ENCODE measurements at regions of chr9 and their contacts with region 1.

Region 1: DNA sequence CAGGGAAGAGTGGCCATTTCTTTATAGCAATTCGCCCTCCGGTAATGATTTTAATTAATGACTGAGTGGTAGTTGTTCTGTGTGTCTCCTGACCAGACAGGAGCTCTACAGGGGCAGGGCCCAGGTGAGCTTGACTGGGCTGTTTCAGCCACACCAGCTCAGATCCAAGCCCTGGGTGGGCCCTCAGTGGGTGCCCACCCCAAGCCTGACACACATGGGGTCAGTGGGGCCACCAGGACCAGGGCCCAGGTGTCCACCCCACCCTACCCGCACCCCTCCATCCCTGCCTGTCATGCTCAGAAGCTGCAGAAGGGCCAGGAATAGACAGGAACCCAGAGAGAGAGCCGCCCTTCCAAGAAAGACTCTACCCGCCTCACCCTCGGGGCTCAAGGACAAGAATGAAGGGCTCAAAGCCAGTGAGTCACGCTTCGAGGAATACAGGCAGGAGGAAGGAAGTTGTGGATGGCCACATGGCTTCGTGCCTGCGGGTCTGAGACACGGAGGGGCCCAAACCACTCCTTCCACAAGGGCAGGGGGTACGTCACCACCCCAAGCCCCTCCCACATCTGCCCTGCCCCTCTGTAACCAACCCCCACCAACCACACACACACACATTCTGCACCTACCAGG is 56.2 kb upstream of the STXBP1 start:
- DNase-seq: peak; percentile 96
- ATAC-seq: peak; percentile 79
- H3K4me3 ChIP-seq: no peak overlapping the region
- H3K27ac ChIP-seq: peak overlapping the region; percentile 88
- H3K4me1 ChIP-seq: peaks cover 66% of the 10 kb centered on the region
- H3K27me3 ChIP-seq: no peaks in the 10 kb centered on the region
- CTCF ChIP-seq: no peak
- POLR2A ChIP-seq: peak; percentile 59; the same call in 1 of the 2 replicates
- RAD21 ChIP-seq: no peak

Region 2: GRCh38 chr9:127537792-127538191 is 18.1 kb before region 1 on chr9:
- CTCF ChIA-PET with region 1: no interaction called
- POLR2A ChIA-PET with region 1: no interaction called
- dilution Hi-C with region 1: no loop called
- in situ Hi-C with region 1: no loop called
- intact Hi-C with region 1: no loop called
- DNase-seq: no peak
- ATAC-seq: no peak
- H3K4me3 ChIP-seq: no peak overlapping the region
- H3K27ac ChIP-seq: peak overlapping the region; percentile 89
- H3K4me1 ChIP-seq: peaks cover 77% of the 10 kb centered on the region
- H3K27me3 ChIP-seq: no peaks in the 10 kb centered on the region
- CTCF ChIP-seq: peak; percentile 32
- POLR2A ChIP-seq: no peak
- RAD21 ChIP-seq: peak; percentile 37; the same call in 1 of the 2 replicates

Region 3: GRCh38 chr9:127785023-127785932 is 229.4 kb after region 1 on chr9:
- CTCF ChIA-PET with region 1: no interaction called
- POLR2A ChIA-PET with region 1: interaction called, 19 read pairs
- dilution Hi-C with region 1: no loop called
- in situ Hi-C with region 1: no loop called
- intact Hi-C with region 1: no loop called
- DNase-seq: peak; percentile 64
- ATAC-seq: peak; percentile 70
- H3K4me3 ChIP-seq: peak overlapping the region; percentile 95
- H3K27ac ChIP-seq: peak overlapping the region; percentile 48; the same call in 1 of the 2 replicates
- H3K4me1 ChIP-seq: no peaks in the 10 kb centered on the region; the same call in 1 of the 2 replicates
- H3K27me3 ChIP-seq: no peaks in the 10 kb centered on the region
- CTCF ChIP-seq: peak; percentile 77
- POLR2A ChIP-seq: no peak; the same call in 1 of the 2 replicates
- RAD21 ChIP-seq: peak; percentile 76

Region 4: DNA sequence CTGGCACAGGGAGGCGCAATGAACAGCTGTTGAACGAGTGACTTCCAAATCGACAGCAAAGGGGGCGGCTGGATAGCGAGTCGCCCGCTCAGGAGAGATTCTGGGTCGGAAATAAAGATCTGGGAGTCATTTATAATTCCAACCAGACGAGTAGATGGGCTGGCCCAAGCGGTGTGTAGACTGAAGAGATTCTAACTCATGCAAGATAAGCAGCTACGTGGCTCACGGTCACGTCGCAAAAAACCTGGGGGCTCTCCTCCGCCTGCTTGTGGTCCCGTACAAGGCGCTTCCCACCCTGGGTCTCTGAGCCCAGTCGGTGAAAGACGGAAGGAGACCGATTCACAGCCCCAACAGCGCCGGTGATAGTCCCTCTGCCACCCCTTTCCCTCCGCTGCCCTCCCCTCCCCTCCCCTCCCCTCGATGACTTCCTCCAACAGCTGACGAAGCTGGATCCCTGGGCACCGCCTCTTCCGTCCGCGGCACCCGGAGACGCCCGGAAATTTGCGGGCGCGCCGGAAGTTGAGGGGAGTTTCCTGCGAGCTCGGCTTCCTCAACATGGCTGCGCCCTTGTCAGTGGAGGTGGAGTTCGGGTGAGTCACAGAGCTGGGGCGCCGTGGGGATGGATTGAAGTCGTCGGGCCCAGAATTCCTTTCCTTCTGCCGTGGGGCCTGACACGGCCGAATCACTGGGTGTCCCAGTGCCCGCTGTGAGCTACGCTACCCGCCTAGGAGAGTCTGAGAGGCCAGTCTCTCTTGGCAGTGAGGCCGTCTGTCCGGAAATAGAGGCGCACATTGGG is 815.1 kb after region 1 on chr9 and contains the start of gene URM1:
- CTCF ChIA-PET with region 1: no interaction called
- POLR2A ChIA-PET with region 1: interaction called, 23 read pairs
- dilution Hi-C with region 1: no loop called
- in situ Hi-C with region 1: no loop called
- intact Hi-C with region 1: no loop called
- DNase-seq: peak; percentile 95
- ATAC-seq: peak; percentile 93
- H3K4me3 ChIP-seq: peak within 1 kb of the TSS; percentile 78
- H3K27ac ChIP-seq: peak within 1 kb of the TSS; percentile 97
- H3K4me1 ChIP-seq: peaks cover 14% of the 10 kb centered on the region
- H3K27me3 ChIP-seq: no peaks in the 10 kb centered on the region
- CTCF ChIP-seq: 0 out of 2 replicates have a peak, but pooled peaks have one; percentile 25
- POLR2A ChIP-seq: peak; percentile 89
- RAD21 ChIP-seq: no peak
- total RNA-seq, gene URM1: 20.6 and 33.2 TPM in 2 replicates